Naive thymus-derived CD4-positive, alpha-beta T cell (primary cell): ENCODE measurements at regions of chr20 and their contacts with region 1.

Region 1: DNA sequence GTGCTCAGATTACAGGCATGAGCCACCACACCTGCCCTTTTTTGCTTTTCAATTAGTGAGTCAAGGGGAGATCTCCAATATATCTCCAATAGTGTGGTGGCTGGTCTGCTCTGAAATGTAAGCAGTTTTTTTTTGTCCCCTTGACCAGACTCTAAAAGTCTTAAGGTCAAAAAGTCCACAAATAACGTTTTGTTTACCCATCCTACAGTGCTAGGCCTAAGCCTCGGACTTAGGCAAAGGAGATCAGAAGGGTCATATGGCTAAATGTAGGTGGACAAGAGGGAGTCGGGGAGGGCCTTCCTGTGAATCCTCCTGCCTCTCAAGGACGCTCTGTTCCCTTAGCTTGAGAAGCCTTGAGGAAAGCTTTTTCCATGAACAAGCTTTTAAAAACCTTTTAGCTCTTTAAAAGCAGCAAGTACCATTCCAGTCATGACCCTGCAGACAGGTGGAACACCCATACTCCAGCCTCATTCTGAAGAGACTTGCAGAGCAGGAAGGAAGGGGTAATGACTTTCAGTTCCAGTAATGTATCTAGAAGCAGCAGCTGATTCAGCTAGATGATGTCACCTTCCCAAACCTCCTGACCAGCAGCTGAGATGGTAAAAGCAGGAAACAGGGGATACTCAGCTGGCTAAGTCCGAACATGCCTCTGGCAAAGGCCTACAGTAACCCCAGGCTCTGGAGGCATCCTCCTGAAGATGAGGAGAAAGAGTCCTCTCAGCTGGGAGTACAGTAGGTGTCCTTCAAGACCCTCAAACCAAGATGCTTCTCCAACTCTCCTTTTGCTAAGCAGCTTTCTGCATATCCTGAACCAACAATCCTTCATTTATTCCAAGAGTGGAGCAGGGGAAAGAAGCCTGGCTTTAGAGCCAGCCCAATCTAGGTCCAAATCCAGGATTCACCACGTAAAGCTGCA is 23.6 kb downstream of the BCL2L1 start:
- DNase-seq: no peak
- ATAC-seq: peak; percentile 80
- H3K4me3 ChIP-seq: no peak overlapping the region
- H3K4me3 Mint-ChIP-seq: peak overlapping the region in 1 of 10 donors; percentile 82
- H3K27ac ChIP-seq: peak overlapping the region; percentile 33
- H3K27ac Mint-ChIP-seq: peak overlapping the region; percentile 39 to 91 (median 73)
- H3K4me1 ChIP-seq: peaks cover 15 to 18% of the 10 kb centered on the region in 2 donors
- H3K4me1 Mint-ChIP-seq: peaks cover 40 to 61% (median 51%) of the 10 kb centered on the region in 7 donors
- H3K27me3 ChIP-seq: no peaks in the 10 kb centered on the region
- H3K27me3 Mint-ChIP-seq: no peaks in the 10 kb centered on the region

Region 2: GRCh38 chr20:31674895-31675827 is 23.9 kb before region 1 on chr20:
- CTCF ChIA-PET with region 1: no interaction called
- POLR2A ChIA-PET with region 1: no interaction called
- intact Hi-C with region 1: loop called in 1 of 2 experiments (anchors 2 kb)
- DNase-seq: peak; percentile 31 to 65 (median 57)
- ATAC-seq: peak; percentile 85
- H3K4me3 ChIP-seq: peak overlapping the region; percentile 88
- H3K4me3 Mint-ChIP-seq: peak overlapping the region; percentile 86 to 100 (median 96)
- H3K27ac ChIP-seq: peak overlapping the region; percentile 84
- H3K27ac Mint-ChIP-seq: peak overlapping the region; percentile 87 to 100 (median 96)
- H3K4me1 ChIP-seq: peaks cover 53 to 63% of the 10 kb centered on the region in 2 donors
- H3K4me1 Mint-ChIP-seq: peaks cover 56 to 87% (median 65%) of the 10 kb centered on the region in 7 donors
- H3K27me3 ChIP-seq: no peaks in the 10 kb centered on the region
- H3K27me3 Mint-ChIP-seq: no peaks in the 10 kb centered on the region

Region 3: GRCh38 chr20:31684153-31685015 is 14.7 kb before region 1 on chr20:
- CTCF ChIA-PET with region 1: interaction called, 4 read pairs
- POLR2A ChIA-PET with region 1: interaction called, 5 read pairs
- intact Hi-C with region 1: loop called in 1 of 2 experiments (anchors 1 kb)
- DNase-seq: no peak
- ATAC-seq: peak; percentile 49
- H3K4me3 ChIP-seq: no peak overlapping the region
- H3K4me3 Mint-ChIP-seq: peak overlapping the region in 7 of 10 donors; percentile 2 to 69 (median 25)
- H3K27ac ChIP-seq: no peak overlapping the region
- H3K27ac Mint-ChIP-seq: peak overlapping the region; percentile 36 to 88 (median 81)
- H3K4me1 ChIP-seq: peaks cover 29 to 42% of the 10 kb centered on the region in 2 donors
- H3K4me1 Mint-ChIP-seq: peaks cover 51 to 89% (median 76%) of the 10 kb centered on the region in 7 donors
- H3K27me3 ChIP-seq: no peaks in the 10 kb centered on the region
- H3K27me3 Mint-ChIP-seq: no peaks in the 10 kb centered on the region